Colonic mucosa (tissue), 4 donors: ENCODE measurements at regions of chr2 and their contacts with region 1.

Region 1: GRCh38 chr2:237858294-237859081 is 935 bp upstream of the RAMP1 start:
- DNase-seq: peak; percentile 60
- H3K4me3 ChIP-seq: peak overlapping the region; percentile 12
- H3K27ac ChIP-seq: no peak overlapping the region
- H3K4me1 ChIP-seq: no peaks in the 10 kb centered on the region
- H3K27me3 ChIP-seq: no peaks in the 10 kb centered on the region
- CTCF ChIP-seq: peak; percentile 58

Region 2: DNA sequence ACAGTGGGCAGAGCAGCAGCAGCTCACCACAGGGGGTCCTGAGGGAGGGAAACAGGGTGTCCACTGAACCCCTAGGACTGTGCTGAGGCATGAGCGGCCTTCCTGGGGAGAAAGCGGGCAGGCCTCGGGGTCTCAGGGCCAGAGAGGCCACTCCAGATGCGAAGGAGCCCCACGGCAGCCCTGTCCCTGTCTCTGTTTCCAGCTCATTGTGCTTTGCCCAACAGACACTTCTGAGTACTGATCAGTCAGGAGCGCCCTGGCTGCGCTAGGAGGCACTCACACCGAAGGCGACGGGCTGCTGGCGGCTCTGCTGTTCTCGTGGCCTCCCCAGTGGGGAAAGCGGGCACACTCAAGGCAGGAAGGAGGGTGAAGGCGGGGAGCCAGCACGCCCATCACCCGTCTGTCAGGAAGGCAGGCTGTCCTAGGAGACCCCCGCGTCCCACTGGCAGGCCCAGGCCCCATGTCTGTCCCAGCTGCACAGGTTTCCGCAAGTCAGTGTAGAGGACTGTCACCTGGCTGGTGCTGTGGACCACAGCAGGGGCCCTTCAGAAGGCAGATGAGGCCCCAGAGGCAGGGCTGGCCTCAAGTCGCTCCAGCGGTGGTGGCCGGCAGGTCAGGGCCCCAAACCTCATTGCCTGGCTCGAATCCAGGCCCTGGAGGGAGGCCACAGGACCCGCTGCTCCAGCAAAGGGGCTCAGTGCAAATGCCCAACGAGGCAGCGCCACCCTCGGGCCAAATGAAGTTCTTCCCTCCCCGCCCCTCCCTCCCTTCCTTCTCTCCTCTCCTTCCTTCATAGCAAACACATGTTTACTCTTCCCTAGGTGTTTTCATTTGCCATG is 248.4 kb after region 1 on chr2:
- intact Hi-C with region 1: loop called (anchors 5 kb)
- DNase-seq: no peak
- H3K4me3 ChIP-seq: peak overlapping the region; percentile 26
- H3K27ac ChIP-seq: no peak overlapping the region
- H3K4me1 ChIP-seq: peaks cover 7% of the 10 kb centered on the region
- H3K27me3 ChIP-seq: no peaks in the 10 kb centered on the region
- CTCF ChIP-seq: peak; percentile 44

Region 3: GRCh38 chr2:238263204-238264071 is 404.9 kb after region 1 on chr2:
- intact Hi-C with region 1: loop called (anchors 5 kb)
- DNase-seq: peak; percentile 96
- H3K4me3 ChIP-seq: no peak overlapping the region
- H3K27ac ChIP-seq: peak overlapping the region; percentile 64
- H3K4me1 ChIP-seq: peaks cover 5% of the 10 kb centered on the region
- H3K27me3 ChIP-seq: no peaks in the 10 kb centered on the region
- CTCF ChIP-seq: peak; percentile 67